Activated CD4-positive, alpha-beta T cell treated with anti-CD3 and anti-CD28 coated beads for 36 hours (primary cell): ENCODE measurements at regions of chr12 and their contacts with region 1.

Region 1: DNA sequence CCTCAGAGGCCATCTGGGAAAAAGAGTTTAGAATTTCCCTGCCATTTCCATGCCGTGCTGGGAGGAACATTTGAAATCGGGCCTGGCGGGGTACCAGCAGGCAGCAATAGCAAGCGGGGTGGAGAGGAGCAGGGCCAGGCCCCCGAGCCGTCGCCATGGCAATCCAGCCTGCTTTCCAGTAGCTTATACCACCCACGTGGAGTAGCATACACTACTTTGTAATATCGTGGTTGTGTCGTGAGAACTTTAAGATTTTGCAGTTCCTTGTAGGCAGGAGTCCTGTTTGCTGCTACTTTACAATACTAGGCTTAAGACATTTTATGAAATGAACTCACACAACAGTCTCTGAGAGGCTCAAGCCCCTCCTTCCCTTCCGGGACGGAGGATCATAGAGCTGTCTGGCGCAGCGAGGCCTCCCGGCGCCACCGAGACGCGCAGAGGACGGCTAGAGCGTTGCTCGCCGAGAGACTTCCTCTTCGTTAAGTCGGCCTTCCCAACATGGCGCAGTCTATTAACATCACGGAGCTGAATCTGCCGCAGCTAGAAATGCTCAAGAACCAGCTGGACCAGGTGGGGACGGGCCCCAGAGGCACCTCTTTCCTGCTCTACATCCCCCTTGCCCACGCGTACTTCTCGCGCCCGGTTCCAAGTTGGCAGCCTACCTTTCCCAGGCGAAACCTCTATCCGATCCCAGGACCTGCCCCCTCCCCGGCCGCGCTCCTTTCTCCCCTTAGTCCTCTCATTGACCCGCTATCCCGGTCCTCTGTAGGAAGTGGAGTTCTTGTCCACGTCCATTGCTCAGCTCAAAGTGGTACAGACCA is at the start of gene PFDN5:
- DNase-seq: peak; percentile 93
- ATAC-seq: peak; percentile 88
- H3K4me3 Mint-ChIP-seq: peak within 1 kb of the TSS; percentile 85
- H3K27ac Mint-ChIP-seq: peak within 1 kb of the TSS; percentile 94
- H3K4me1 Mint-ChIP-seq: peaks cover 52% of the 10 kb centered on the region
- H3K27me3 Mint-ChIP-seq: no peaks in the 10 kb centered on the region
- total RNA-seq, gene PFDN5: 253 to 322 TPM

Region 2: GRCh38 chr12:53205747-53206419 is 89.4 kb before region 1 on chr12:
- CTCF ChIA-PET with region 1: interaction called, 4 read pairs
- POLR2A ChIA-PET with region 1: interaction called, 8 read pairs
- intact Hi-C with region 1: loop called in 1 of 2 experiments (anchors 2 kb)
- DNase-seq: peak; percentile 89
- ATAC-seq: peak; percentile 78
- H3K4me3 Mint-ChIP-seq: peak overlapping the region; percentile 77
- H3K27ac Mint-ChIP-seq: peak overlapping the region; percentile 87
- H3K4me1 Mint-ChIP-seq: peaks cover 74% of the 10 kb centered on the region
- H3K27me3 Mint-ChIP-seq: no peaks in the 10 kb centered on the region

Region 3: DNA sequence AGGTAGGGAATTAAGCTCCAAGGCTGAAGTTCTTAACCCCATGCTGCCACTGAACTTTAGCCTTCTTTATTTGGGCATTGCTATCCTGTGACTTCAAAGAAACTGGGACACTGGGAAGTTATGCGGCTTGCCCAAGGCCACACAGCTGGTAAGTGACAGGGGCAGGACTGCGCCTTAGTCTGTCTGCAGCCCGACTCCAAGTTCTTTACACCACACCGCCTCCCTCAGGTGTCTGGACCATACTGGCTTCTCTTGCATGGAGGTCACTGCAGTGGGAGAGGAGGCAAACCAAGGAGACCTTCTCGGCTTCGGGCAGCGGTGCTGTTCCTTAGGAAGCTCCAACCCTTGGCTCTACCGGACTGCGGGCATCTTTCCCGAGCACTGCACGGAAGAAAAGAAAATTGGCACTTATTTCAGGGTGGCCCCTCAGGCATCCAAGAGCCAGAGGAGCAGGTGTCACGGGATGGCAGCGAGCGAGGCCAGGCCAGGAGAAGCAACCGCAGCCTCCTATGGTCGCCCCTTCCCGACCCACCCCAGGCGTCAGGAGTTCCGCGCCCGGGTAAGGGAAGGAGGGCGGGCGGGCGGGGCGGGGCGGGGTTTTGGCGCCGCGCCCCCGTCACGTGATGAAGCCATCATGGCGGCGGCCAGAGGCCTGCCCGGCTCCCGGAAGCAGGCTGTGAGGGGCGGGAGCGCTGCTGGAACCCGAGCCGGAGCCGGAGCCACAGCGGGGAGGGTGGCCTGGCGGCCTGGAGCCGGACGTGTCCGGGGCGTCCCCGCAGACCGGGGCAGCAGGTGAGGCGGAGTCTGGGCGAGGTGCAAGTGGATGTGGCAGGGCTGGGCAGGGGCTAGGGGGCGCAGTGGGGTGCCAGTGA is 43.6 kb before region 1 on chr12:
- CTCF ChIA-PET with region 1: interaction called, 5 read pairs
- POLR2A ChIA-PET with region 1: no interaction called
- intact Hi-C with region 1: loop called in 1 of 2 experiments (anchors 1 kb)
- DNase-seq: peak; percentile 83
- ATAC-seq: peak; percentile 91
- H3K4me3 Mint-ChIP-seq: peak overlapping the region; percentile 97
- H3K27ac Mint-ChIP-seq: peak overlapping the region; percentile 95
- H3K4me1 Mint-ChIP-seq: peaks cover 36% of the 10 kb centered on the region
- H3K27me3 Mint-ChIP-seq: no peaks in the 10 kb centered on the region

Region 4: GRCh38 chr12:53344824-53345485 is 49.7 kb after region 1 on chr12:
- CTCF ChIA-PET with region 1: interaction called, 8 read pairs
- POLR2A ChIA-PET with region 1: no interaction called
- intact Hi-C with region 1: loop called in 1 of 2 experiments (anchors 2 kb)
- DNase-seq: peak; percentile 88
- ATAC-seq: peak; percentile 85
- H3K4me3 Mint-ChIP-seq: peak overlapping the region; percentile 83
- H3K27ac Mint-ChIP-seq: peak overlapping the region; percentile 90
- H3K4me1 Mint-ChIP-seq: peaks cover 24% of the 10 kb centered on the region
- H3K27me3 Mint-ChIP-seq: peaks cover 2% of the 10 kb centered on the region

Region 5: DNA sequence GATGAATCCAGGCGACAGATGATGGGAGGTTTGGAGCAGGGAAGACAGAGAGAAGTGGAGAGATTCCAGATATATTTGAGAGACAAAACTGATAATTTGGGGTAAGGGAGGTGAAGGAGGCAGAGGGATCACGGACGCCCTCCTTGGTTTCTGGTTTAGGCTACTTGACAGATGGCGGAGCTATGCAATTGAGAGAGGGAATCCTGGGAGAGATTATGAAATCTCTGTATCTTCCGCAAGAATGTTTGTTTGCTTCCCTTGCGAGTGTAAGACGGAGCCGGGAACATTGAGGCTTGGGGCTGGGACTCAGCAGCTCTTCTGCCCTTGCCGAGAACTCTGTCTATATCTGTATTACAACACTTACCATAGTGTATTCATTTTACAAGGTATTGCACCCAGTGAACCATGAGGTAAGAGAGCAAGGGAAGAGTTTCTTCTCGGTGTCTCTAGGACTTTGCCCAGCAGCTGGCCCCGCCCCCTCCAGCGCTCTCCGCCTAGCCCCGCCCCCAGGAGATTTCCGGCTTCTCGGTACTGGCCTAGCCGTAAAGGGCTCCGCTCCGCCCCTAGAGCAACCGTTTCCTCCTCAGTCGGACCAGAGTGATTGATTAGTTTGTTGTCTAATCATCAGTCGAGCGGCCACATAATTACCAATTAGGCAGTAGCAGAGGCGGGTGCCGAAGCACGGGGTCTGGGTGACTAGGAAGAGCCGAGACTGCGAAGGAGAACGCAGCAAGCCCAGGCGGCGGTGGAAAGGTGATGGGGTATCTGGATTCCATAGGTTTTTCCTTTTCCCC is 146.0 kb after region 1 on chr12 and contains the start of gene PRR13:
- CTCF ChIA-PET with region 1: no interaction called
- POLR2A ChIA-PET with region 1: no interaction called
- intact Hi-C with region 1: loop called in 1 of 2 experiments (anchors 1 kb)
- DNase-seq: peak; percentile 100
- ATAC-seq: peak; percentile 99
- H3K4me3 Mint-ChIP-seq: peak within 1 kb of the TSS; percentile 92
- H3K27ac Mint-ChIP-seq: peak within 1 kb of the TSS; percentile 95
- H3K4me1 Mint-ChIP-seq: peaks cover 30% of the 10 kb centered on the region
- H3K27me3 Mint-ChIP-seq: no peaks in the 10 kb centered on the region
- total RNA-seq, gene PRR13: 250 to 266 TPM

Region 6: DNA sequence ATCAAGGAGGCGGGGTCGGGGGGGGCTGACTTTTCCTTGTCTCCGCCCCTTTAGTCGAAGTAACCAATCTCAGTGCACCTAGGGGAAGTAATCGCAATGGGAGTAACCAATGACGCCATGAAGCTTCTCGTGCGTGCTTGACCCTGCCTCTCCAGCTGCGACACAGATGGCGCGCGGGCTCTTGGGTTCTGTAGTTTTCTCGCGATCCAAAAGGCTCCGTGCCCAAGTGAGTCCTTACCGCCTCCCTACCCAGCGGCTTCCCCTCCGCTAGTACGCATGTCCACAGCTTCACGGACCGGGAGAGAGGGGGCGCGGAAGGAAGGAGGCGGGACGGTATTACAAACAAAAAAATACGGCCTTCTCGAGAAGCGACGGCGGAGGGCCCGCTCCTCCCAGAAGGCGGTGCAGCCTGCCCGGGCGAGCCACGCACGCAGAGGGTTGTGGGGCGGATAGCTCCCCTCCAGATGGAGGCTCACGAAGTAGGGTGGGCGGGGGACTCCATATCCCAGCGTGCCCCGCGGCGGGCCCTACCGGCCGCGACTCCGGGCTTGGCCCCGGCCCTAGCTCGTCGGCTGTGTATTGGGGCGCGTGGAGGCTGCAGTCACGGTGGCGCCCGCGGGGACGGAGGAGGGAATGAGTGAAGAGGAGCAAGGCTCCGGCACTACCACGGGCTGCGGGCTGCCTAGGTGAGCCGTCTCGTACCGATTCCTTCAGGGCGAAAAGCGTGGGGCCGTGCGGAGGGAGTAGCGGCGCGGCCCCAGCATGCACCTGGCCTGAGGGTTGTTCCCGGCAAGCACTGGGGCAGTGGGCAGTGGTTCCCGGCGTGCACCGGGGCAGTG is 205.7 kb after region 1 on chr12 and contains the start of gene TARBP2:
- CTCF ChIA-PET with region 1: no interaction called
- POLR2A ChIA-PET with region 1: interaction called, 3 read pairs
- intact Hi-C with region 1: loop called in 1 of 2 experiments (anchors 1 kb)
- DNase-seq: peak; percentile 98
- ATAC-seq: peak; percentile 84
- H3K4me3 Mint-ChIP-seq: peak within 1 kb of the TSS; percentile 81
- H3K27ac Mint-ChIP-seq: peak within 1 kb of the TSS; percentile 98
- H3K4me1 Mint-ChIP-seq: peaks cover 31% of the 10 kb centered on the region
- H3K27me3 Mint-ChIP-seq: no peaks in the 10 kb centered on the region
- total RNA-seq, gene TARBP2: 28.3 to 30.2 TPM